CD4-positive, alpha-beta memory T cell (primary cell): ENCODE measurements at regions of chr12 and their contacts with region 1.

Region 1: GRCh38 chr12:452667-453210 is 7.0 kb upstream of the B4GALNT3 start:
- DNase-seq: peak in 3 of 5 donors; percentile 63 to 65 (median 65)
- H3K4me3 ChIP-seq: no peak overlapping the region
- H3K4me3 Mint-ChIP-seq: peak overlapping the region in 1 of 8 donors; percentile 40
- H3K27ac ChIP-seq: no peak overlapping the region
- H3K27ac Mint-ChIP-seq: peak overlapping the region in 4 of 7 donors; percentile 22 to 72 (median 53)
- H3K4me1 ChIP-seq: peaks cover 4% of the 10 kb centered on the region
- H3K4me1 Mint-ChIP-seq: peaks cover 0 to 5% (median 3%) of the 10 kb centered on the region in 4 donors
- H3K27me3 ChIP-seq: no peaks in the 10 kb centered on the region
- H3K27me3 Mint-ChIP-seq: no peaks in the 10 kb centered on the region

Region 2: GRCh38 chr12:243381-243780 is 209.4 kb before region 1 on chr12:
- CTCF ChIA-PET with region 1: no interaction called
- POLR2A ChIA-PET with region 1: no interaction called
- intact Hi-C with region 1: no loop called
- DNase-seq: no peak
- H3K4me3 ChIP-seq: no peak overlapping the region
- H3K4me3 Mint-ChIP-seq: no peak overlapping the region
- H3K27ac ChIP-seq: no peak overlapping the region
- H3K27ac Mint-ChIP-seq: no peak overlapping the region
- H3K4me1 ChIP-seq: no peaks in the 10 kb centered on the region
- H3K4me1 Mint-ChIP-seq: no peaks in the 10 kb centered on the region
- H3K27me3 ChIP-seq: no peaks in the 10 kb centered on the region
- H3K27me3 Mint-ChIP-seq: peaks cover 11 to 19% of the 10 kb centered on the region in 2 donors

Region 3: DNA sequence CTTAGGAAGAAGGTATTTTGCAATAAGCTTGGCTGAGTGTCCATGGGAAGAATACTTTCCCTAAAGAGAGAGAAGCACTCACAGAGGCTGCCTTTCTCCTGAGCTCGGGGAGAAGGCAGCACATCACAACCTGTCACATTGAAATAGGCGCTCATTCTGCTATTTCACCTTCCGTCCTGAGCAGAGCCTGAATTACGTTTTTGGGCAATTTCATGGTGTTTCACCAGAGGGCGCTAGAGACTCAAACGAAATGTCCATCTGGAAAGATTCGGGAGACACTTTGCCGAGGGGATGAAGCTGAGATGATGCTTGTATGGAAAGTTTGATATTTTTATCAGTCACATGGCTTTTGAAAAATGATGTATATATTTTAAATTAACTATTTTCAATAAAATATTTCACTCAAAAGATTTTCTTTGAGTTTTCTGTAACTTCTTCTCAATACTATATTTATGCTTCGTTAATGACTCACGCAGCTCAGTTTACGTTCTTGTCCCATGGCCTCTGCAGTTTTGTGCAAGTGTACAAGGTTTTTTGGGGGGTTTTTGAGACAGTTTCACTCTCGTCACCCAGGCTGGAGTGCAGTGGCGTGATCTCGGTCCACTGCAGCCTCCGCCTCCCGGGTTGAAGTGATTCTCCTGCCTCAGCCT is 10.4 kb before region 1 on chr12:
- CTCF ChIA-PET with region 1: interaction called, 15 read pairs
- POLR2A ChIA-PET with region 1: no interaction called
- intact Hi-C with region 1: no loop called
- DNase-seq: peak in 4 of 5 donors; percentile 31 to 48 (median 42)
- H3K4me3 ChIP-seq: no peak overlapping the region
- H3K4me3 Mint-ChIP-seq: no peak overlapping the region
- H3K27ac ChIP-seq: no peak overlapping the region
- H3K27ac Mint-ChIP-seq: no peak overlapping the region
- H3K4me1 ChIP-seq: no peaks in the 10 kb centered on the region
- H3K4me1 Mint-ChIP-seq: peaks cover 0 to 2% (median under 1%) of the 10 kb centered on the region in 4 donors
- H3K27me3 ChIP-seq: no peaks in the 10 kb centered on the region
- H3K27me3 Mint-ChIP-seq: peaks cover 2 to 3% of the 10 kb centered on the region in 2 donors

Region 4: GRCh38 chr12:464484-465267 is 11.9 kb after region 1 on chr12:
- CTCF ChIA-PET with region 1: interaction called, 18 read pairs
- POLR2A ChIA-PET with region 1: no interaction called
- intact Hi-C with region 1: no loop called
- DNase-seq: no peak
- H3K4me3 ChIP-seq: no peak overlapping the region
- H3K4me3 Mint-ChIP-seq: no peak overlapping the region
- H3K27ac ChIP-seq: no peak overlapping the region
- H3K27ac Mint-ChIP-seq: peak overlapping the region in 2 of 7 donors; percentile 55 to 87
- H3K4me1 ChIP-seq: no peaks in the 10 kb centered on the region
- H3K4me1 Mint-ChIP-seq: peaks cover 10 to 25% (median 16%) of the 10 kb centered on the region in 4 donors
- H3K27me3 ChIP-seq: no peaks in the 10 kb centered on the region
- H3K27me3 Mint-ChIP-seq: peaks cover 0 to 3% of the 10 kb centered on the region in 2 donors

Region 5: GRCh38 chr12:538731-539539 is 86.2 kb after region 1 on chr12:
- CTCF ChIA-PET with region 1: interaction called, 33 read pairs
- POLR2A ChIA-PET with region 1: interaction called, 3 read pairs
- intact Hi-C with region 1: no loop called
- DNase-seq: peak; percentile 80 to 87 (median 84)
- H3K4me3 ChIP-seq: no peak overlapping the region
- H3K4me3 Mint-ChIP-seq: peak overlapping the region in 7 of 8 donors; percentile 0 to 78 (median 61)
- H3K27ac ChIP-seq: no peak overlapping the region
- H3K27ac Mint-ChIP-seq: peak overlapping the region; percentile 84 to 93 (median 88)
- H3K4me1 ChIP-seq: peaks cover 25% of the 10 kb centered on the region
- H3K4me1 Mint-ChIP-seq: peaks cover 14 to 22% (median 19%) of the 10 kb centered on the region in 4 donors
- H3K27me3 ChIP-seq: no peaks in the 10 kb centered on the region
- H3K27me3 Mint-ChIP-seq: no peaks in the 10 kb centered on the region

Region 6: DNA sequence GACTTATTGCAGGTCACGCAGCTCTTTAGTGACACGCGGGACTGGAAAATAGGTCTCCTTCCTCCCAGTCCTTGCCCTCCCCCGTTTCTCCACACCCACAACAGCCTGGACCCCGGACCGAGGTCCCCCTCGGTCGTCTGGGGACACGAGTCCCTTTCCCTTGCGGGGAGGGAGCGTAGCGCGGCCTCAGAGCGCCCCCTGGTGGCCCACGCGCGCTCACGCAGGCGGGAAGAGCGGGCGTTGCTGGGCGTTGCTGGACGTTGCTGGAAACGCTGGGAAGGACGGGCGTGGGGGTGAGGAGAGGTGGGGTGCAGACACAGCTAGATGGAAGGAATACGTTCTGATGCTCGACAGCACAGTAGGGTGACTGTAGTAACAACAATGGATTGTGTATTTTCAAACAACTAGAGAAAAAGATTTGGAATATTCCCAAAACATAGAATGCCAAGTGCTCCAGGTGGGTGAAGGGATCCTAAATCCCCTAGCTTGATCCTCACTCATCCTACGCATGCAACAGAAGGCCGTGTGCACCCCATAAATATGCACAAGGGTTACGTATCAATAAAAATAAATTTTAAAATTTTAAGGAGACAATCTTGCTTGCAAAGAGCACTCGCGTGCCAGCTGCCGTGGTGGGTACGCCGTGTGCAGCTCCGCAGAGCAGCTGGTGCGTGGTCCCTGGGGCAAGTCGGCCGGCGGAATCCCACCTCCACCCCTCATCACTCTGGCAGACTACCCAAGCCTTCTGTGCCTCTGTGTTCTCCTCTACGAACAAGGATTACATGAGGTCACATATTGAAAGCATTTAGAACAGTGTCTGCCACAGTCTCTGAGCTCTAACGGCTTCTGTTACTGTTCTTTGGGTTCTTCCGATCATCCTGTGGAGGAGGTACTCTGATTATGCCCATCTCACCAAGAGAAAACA is 94.4 kb after region 1 on chr12:
- CTCF ChIA-PET with region 1: interaction called, 71 read pairs
- POLR2A ChIA-PET with region 1: interaction called, 3 read pairs
- intact Hi-C with region 1: no loop called
- DNase-seq: peak in 4 of 5 donors; percentile 52 to 70 (median 60)
- H3K4me3 ChIP-seq: no peak overlapping the region
- H3K4me3 Mint-ChIP-seq: peak overlapping the region in 1 of 8 donors; percentile 5
- H3K27ac ChIP-seq: no peak overlapping the region
- H3K27ac Mint-ChIP-seq: peak overlapping the region in 2 of 7 donors; percentile 42
- H3K4me1 ChIP-seq: peaks cover 14% of the 10 kb centered on the region
- H3K4me1 Mint-ChIP-seq: peaks cover 12 to 28% (median 21%) of the 10 kb centered on the region in 4 donors
- H3K27me3 ChIP-seq: no peaks in the 10 kb centered on the region
- H3K27me3 Mint-ChIP-seq: peaks cover 5 to 8% of the 10 kb centered on the region in 2 donors